CD8-positive, alpha-beta T cell (primary cell): ENCODE measurements at regions of chr22 and their contacts with region 1.

Region 1: GRCh38 chr22:40044102-40044869 is 49.5 kb downstream of the FAM83F start:
- DNase-seq: peak; percentile 95 to 100 (median 99)
- ATAC-seq: peak; percentile 86
- H3K4me3 ChIP-seq: peak overlapping the region; percentile 80 to 84
- H3K4me3 Mint-ChIP-seq: peak overlapping the region; percentile 94
- H3K27ac ChIP-seq: peak overlapping the region; percentile 97 to 98
- H3K27ac Mint-ChIP-seq: peak overlapping the region; percentile 100
- H3K4me1 ChIP-seq: peaks cover 28% of the 10 kb centered on the region
- H3K4me1 Mint-ChIP-seq: peaks cover 39% of the 10 kb centered on the region
- H3K27me3 ChIP-seq: no peaks in the 10 kb centered on the region
- H3K27me3 Mint-ChIP-seq: peaks cover 8% of the 10 kb centered on the region
- CTCF ChIP-seq: no peak

Region 2: GRCh38 chr22:39152511-39153219 is 891.6 kb before region 1 on chr22 and contains the start of gene CBX7:
- CTCF ChIA-PET with region 1: no interaction called
- POLR2A ChIA-PET with region 1: no interaction called
- intact Hi-C with region 1: loop called in 1 of 2 experiments (anchors 10 kb)
- DNase-seq: peak; percentile 84 to 99 (median 92)
- ATAC-seq: peak; percentile 82
- H3K4me3 ChIP-seq: peak within 1 kb of the TSS; percentile 83 to 89
- H3K4me3 Mint-ChIP-seq: peak within 1 kb of the TSS; percentile 92
- H3K27ac ChIP-seq: peak within 1 kb of the TSS; percentile 86 to 87
- H3K27ac Mint-ChIP-seq: peak within 1 kb of the TSS; percentile 91
- H3K4me1 ChIP-seq: peaks cover 51% of the 10 kb centered on the region
- H3K4me1 Mint-ChIP-seq: peaks cover 42% of the 10 kb centered on the region
- H3K27me3 ChIP-seq: no peaks in the 10 kb centered on the region
- H3K27me3 Mint-ChIP-seq: no peaks in the 10 kb centered on the region
- CTCF ChIP-seq: no peak
- total RNA-seq, gene CBX7: 34.2 to 37.2 TPM

Region 3: DNA sequence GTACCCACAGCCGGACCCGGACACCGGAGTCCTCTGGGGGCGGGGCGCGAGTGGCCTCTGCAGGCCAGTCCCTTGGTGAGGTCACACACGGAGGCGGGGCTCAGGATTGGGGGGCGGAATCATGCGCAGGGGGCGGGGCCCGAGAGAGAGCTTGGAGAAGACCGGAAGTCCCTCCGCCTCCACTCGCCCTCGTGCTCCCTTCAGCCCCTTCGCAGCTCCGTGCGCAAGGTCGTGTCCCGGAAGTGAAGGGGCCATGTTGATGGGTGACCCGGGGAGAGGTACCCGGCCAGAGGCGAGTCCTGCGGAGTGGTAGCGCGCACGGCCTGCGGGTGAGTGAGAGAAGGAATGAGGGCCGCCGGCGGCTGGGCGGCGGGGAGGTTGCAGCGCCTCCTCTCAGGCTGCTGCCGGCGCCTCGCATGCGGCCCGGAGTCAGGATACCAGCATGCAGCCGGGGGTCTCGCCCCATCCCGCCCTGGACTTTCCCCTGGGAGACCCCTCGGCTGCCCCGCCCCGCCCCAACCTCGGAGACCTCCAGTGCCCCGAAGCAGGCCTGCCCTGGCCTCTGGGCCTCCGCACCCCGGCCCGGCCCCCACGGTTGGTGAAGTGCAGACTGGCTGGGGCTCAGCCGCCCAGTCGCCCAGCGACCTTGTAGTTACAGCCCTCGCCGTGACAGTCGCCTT is 542.0 kb before region 1 on chr22 and contains the start of gene MIEF1:
- CTCF ChIA-PET with region 1: no interaction called
- POLR2A ChIA-PET with region 1: interaction called, 5 read pairs
- intact Hi-C with region 1: loop called in 1 of 2 experiments (anchors 1 kb)
- DNase-seq: peak; percentile 67 to 96 (median 88)
- ATAC-seq: peak; percentile 94
- H3K4me3 ChIP-seq: peak within 1 kb of the TSS; percentile 66 to 80
- H3K4me3 Mint-ChIP-seq: peak within 1 kb of the TSS; percentile 97
- H3K27ac ChIP-seq: peak within 1 kb of the TSS; percentile 64 to 80
- H3K27ac Mint-ChIP-seq: peak within 1 kb of the TSS; percentile 92
- H3K4me1 ChIP-seq: peaks cover 30% of the 10 kb centered on the region
- H3K4me1 Mint-ChIP-seq: peaks cover 41% of the 10 kb centered on the region
- H3K27me3 ChIP-seq: no peaks in the 10 kb centered on the region
- H3K27me3 Mint-ChIP-seq: no peaks in the 10 kb centered on the region
- CTCF ChIP-seq: no peak
- total RNA-seq, gene MIEF1: 24.8 to 25.3 TPM

Region 4: DNA sequence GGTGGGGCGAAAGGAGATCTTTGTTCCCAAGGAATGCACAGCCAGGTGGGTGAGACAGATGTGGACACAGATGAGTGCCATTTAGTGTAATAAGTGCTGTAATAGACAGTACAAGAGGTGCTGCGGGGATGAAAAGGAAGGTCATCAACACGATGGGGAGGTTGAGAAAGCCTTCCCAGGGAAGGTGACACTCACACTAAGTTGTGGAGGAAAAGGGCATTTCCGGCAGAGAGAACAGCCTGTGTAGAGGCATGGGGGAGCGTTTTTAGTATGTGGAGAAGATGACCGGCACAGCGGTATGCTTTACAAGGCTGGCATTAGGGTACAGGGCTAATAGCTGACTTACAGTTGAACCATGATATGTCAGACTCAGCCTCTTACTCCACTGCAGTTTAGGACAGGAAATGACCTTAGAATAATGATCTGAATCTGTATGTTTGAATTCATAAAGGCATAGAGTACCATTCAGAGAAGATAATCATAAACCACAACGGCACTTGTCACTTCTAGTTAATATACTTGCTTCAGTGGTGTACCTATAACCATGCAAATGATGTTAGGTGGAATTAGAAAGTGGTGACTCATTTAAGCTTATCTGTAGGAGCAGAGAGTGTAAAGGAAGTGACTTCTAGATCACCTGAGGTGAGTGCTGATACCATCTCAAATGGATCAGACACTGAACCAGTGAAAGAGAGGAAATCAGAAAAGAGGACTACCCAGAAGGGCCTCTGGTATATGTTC is 11.0 kb after region 1 on chr22:
- CTCF ChIA-PET with region 1: no interaction called
- POLR2A ChIA-PET with region 1: interaction called, 22 read pairs
- intact Hi-C with region 1: loop called in 1 of 2 experiments (anchors 1 kb)
- DNase-seq: peak in 2 of 9 experiments; percentile 57 to 71
- ATAC-seq: peak; percentile 91
- H3K4me3 ChIP-seq: no peak overlapping the region
- H3K4me3 Mint-ChIP-seq: peak overlapping the region; percentile 53
- H3K27ac ChIP-seq: peak overlapping the region; percentile 16 to 70
- H3K27ac Mint-ChIP-seq: peak overlapping the region; percentile 86
- H3K4me1 ChIP-seq: peaks cover 83% of the 10 kb centered on the region
- H3K4me1 Mint-ChIP-seq: peaks cover 76% of the 10 kb centered on the region
- H3K27me3 ChIP-seq: no peaks in the 10 kb centered on the region
- H3K27me3 Mint-ChIP-seq: no peaks in the 10 kb centered on the region
- CTCF ChIP-seq: no peak

Region 5: DNA sequence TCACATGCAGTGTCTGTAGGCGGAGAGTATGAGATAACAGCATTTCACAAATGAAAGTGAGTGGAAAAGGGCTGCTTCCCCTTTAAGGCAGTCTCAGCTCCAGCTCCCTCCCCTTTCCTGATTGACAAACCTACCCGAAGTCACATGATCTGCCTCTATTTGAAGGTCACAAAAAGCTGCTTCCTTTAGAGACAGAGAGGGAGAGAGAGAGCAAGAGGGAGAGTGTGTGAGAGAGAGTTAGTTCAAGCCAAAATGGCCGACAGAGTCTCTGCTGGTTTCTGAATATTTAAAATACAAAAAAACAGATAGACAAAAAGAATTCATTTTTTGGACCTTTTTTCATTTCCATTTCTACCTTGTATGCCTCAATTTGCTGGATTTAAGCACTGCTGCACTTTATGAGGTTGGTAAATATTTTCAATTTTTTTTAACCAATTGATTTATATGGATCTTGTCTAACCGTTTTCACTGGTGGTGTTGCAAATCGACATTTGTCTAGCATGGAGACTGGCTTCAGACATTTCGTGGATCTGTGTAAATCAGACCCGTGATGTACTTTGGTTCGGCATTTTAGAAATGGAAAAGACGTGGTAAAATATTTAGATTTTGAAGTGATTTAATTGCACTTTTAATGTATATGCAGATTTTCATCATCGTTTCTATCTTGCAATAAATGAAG is 133.6 kb after region 1 on chr22 and contains the start of gene TNRC6B:
- CTCF ChIA-PET with region 1: no interaction called
- POLR2A ChIA-PET with region 1: interaction called, 45 read pairs
- intact Hi-C with region 1: loop called (anchors 1 to 2 kb)
- DNase-seq: peak; percentile 35 to 96 (median 74)
- ATAC-seq: peak; percentile 76
- H3K4me3 ChIP-seq: peak within 1 kb of the TSS; percentile 59 to 71
- H3K4me3 Mint-ChIP-seq: peak within 1 kb of the TSS; percentile 82
- H3K27ac ChIP-seq: peak within 1 kb of the TSS; percentile 60 to 71
- H3K27ac Mint-ChIP-seq: peak within 1 kb of the TSS; percentile 83
- H3K4me1 ChIP-seq: peaks cover 51% of the 10 kb centered on the region
- H3K4me1 Mint-ChIP-seq: peaks cover 60% of the 10 kb centered on the region
- H3K27me3 ChIP-seq: no peaks in the 10 kb centered on the region
- H3K27me3 Mint-ChIP-seq: no peaks in the 10 kb centered on the region
- CTCF ChIP-seq: no peak
- total RNA-seq, gene TNRC6B: 85.3 to 106 TPM

Region 6: DNA sequence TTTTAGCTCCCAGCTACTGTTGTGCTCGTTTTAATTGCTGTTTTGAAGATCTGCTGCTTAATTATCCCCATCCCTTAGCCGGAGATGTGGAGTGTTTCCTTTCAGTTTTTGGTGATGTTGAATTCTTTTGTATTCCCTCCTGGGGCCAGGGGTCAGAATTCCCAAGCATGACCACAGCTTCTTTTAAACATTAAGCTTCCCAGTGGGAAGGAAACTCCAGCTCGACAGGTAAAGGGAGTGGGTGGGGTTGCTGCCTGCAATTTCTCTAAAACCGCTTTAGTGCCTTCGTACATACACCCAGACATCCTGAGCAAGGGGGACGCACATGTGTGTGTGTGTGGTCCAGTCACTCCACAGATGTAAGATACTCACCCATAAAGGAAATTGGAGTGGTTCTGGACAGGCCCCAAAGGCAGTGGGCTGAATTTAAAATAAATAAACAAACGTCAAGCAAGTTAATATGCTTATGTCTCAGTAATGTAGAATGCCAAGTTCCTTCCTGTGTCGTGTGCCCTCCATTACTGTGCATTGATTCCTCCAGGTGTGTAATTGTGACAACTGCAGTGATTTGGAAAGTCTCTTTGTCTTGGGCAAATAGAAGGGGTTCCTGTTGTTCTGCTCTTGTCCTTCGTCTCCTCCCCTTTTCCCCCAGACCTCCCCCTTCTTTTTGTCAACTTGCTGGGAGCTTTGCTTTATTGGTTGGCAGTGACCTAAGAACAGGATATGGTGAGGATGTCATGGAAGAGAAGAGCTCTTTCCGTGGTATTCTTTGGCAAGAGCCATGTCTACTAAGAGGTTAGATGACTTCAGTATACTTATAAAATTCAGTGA is 282.8 kb after region 1 on chr22:
- CTCF ChIA-PET with region 1: no interaction called
- POLR2A ChIA-PET with region 1: interaction called, 9 read pairs
- intact Hi-C with region 1: loop called in 1 of 2 experiments (anchors 1 kb)
- DNase-seq: peak in 2 of 9 experiments; percentile 44 to 62
- ATAC-seq: peak; percentile 7
- H3K4me3 ChIP-seq: peak overlapping the region in 1 of 2 experiments; percentile 3
- H3K4me3 Mint-ChIP-seq: peak overlapping the region; percentile 53
- H3K27ac ChIP-seq: peak overlapping the region; percentile 9 to 54
- H3K27ac Mint-ChIP-seq: peak overlapping the region; percentile 92
- H3K4me1 ChIP-seq: peaks cover 96% of the 10 kb centered on the region
- H3K4me1 Mint-ChIP-seq: peaks cover 99% of the 10 kb centered on the region
- H3K27me3 ChIP-seq: no peaks in the 10 kb centered on the region
- H3K27me3 Mint-ChIP-seq: no peaks in the 10 kb centered on the region
- CTCF ChIP-seq: no peak